ENCODE measurements at regions of chr6 and their contacts with region 1.

Region 1: GRCh38 chr6:106702451-106703110 is 73.2 kb downstream of the QRSL1 start:
- DNase-seq: peak; percentile 30
- ATAC-seq: peak; percentile 92
- H3K4me3 Mint-ChIP-seq: peak overlapping the region; percentile 81
- H3K27ac Mint-ChIP-seq: peak overlapping the region; percentile 98
- H3K4me1 Mint-ChIP-seq: peaks cover 91% of the 10 kb centered on the region
- H3K27me3 Mint-ChIP-seq: no peaks in the 10 kb centered on the region
- CTCF ChIP-seq: no peak

Region 2: DNA sequence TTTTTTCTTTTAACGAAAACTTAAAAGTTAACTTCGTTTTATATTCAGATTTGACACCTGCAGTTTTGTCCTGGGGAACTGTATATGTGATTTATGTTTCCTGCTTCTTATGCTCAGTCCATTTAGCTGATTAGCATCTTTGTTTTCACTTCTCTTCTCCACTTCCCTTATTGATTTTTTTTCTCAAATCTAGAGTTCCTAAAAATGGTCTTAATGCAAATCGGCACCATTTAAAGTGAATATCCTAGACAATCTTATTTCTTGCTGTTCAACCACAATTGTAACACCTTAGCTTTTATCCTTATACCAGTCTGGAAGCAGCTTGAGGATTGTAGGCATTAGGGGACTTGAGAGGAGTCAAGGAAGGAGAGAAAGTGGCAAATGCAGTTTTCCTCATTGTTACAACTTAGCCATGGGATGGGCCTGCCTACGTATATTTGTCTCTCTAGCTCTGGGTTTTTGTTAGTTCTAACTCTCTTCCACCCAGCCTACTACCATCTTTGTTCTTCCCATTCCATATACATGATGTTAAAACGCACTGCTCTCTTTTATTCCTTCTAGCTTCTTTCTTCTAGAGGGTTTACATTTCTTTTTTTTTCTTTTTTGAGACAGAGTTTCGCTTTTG is 64.8 kb before region 1 on chr6:
- CTCF ChIA-PET with region 1: interaction called, 3 read pairs
- POLR2A ChIA-PET with region 1: interaction called, 6 read pairs
- intact Hi-C with region 1: loop called (anchors 2 kb)
- DNase-seq: no peak
- ATAC-seq: peak; percentile 87
- H3K4me3 Mint-ChIP-seq: peak overlapping the region; percentile 69
- H3K27ac Mint-ChIP-seq: peak overlapping the region; percentile 90
- H3K4me1 Mint-ChIP-seq: peaks cover 80% of the 10 kb centered on the region
- H3K27me3 Mint-ChIP-seq: no peaks in the 10 kb centered on the region
- CTCF ChIP-seq: no peak

Region 3: GRCh38 chr6:106658469-106658868 is 44.1 kb before region 1 on chr6:
- CTCF ChIA-PET with region 1: no interaction called
- POLR2A ChIA-PET with region 1: no interaction called
- intact Hi-C with region 1: no loop called
- DNase-seq: no peak
- ATAC-seq: no peak
- H3K4me3 Mint-ChIP-seq: no peak overlapping the region
- H3K27ac Mint-ChIP-seq: peak overlapping the region; percentile 35
- H3K4me1 Mint-ChIP-seq: peaks cover 29% of the 10 kb centered on the region
- H3K27me3 Mint-ChIP-seq: no peaks in the 10 kb centered on the region
- CTCF ChIP-seq: no peak

Region 4: GRCh38 chr6:106715922-106716321 is 13.3 kb after region 1 on chr6:
- CTCF ChIA-PET with region 1: no interaction called
- POLR2A ChIA-PET with region 1: interaction called, 9 read pairs
- intact Hi-C with region 1: loop called (anchors 1 kb)
- DNase-seq: no peak
- ATAC-seq: peak; percentile 56
- H3K4me3 Mint-ChIP-seq: peak overlapping the region; percentile 76
- H3K27ac Mint-ChIP-seq: peak overlapping the region; percentile 85
- H3K4me1 Mint-ChIP-seq: peaks cover 49% of the 10 kb centered on the region
- H3K27me3 Mint-ChIP-seq: no peaks in the 10 kb centered on the region
- CTCF ChIP-seq: no peak

Region 5: DNA sequence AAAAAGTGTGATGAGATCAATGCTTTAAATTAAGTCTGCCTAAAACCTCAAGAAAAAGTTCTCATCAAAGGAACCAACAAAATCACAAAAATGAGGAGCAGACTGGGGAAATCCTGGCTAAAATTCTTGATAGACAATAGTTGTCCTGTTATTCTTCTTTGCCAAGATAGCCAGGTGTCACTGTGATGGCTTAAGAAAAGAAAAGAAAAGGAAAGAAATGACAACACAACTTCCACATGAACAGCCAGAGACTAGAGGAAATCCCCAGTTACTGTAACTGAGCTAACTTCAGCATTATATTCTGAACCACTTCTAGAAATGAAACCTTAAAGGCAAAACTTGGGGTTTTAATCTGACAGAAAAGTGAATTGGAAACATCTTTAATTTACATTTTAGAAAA is 142.3 kb after region 1 on chr6:
- CTCF ChIA-PET with region 1: no interaction called
- POLR2A ChIA-PET with region 1: no interaction called
- intact Hi-C with region 1: loop called (anchors 5 kb)
- DNase-seq: no peak
- ATAC-seq: peak; percentile 58
- H3K4me3 Mint-ChIP-seq: peak overlapping the region; percentile 41
- H3K27ac Mint-ChIP-seq: peak overlapping the region; percentile 72
- H3K4me1 Mint-ChIP-seq: peaks cover 57% of the 10 kb centered on the region
- H3K27me3 Mint-ChIP-seq: no peaks in the 10 kb centered on the region
- CTCF ChIP-seq: no peak

Region 6: GRCh38 chr6:107033126-107033525 is 330.5 kb after region 1 on chr6:
- CTCF ChIA-PET with region 1: no interaction called
- POLR2A ChIA-PET with region 1: no interaction called
- intact Hi-C with region 1: loop called (anchors 1 kb)
- DNase-seq: no peak
- ATAC-seq: no peak
- H3K4me3 Mint-ChIP-seq: no peak overlapping the region
- H3K27ac Mint-ChIP-seq: no peak overlapping the region
- H3K4me1 Mint-ChIP-seq: peaks cover 21% of the 10 kb centered on the region
- H3K27me3 Mint-ChIP-seq: no peaks in the 10 kb centered on the region
- CTCF ChIP-seq: no peak